IMR-90 (cell line): ENCODE measurements at regions of chr2 and their contacts with region 1.

Region 1: DNA sequence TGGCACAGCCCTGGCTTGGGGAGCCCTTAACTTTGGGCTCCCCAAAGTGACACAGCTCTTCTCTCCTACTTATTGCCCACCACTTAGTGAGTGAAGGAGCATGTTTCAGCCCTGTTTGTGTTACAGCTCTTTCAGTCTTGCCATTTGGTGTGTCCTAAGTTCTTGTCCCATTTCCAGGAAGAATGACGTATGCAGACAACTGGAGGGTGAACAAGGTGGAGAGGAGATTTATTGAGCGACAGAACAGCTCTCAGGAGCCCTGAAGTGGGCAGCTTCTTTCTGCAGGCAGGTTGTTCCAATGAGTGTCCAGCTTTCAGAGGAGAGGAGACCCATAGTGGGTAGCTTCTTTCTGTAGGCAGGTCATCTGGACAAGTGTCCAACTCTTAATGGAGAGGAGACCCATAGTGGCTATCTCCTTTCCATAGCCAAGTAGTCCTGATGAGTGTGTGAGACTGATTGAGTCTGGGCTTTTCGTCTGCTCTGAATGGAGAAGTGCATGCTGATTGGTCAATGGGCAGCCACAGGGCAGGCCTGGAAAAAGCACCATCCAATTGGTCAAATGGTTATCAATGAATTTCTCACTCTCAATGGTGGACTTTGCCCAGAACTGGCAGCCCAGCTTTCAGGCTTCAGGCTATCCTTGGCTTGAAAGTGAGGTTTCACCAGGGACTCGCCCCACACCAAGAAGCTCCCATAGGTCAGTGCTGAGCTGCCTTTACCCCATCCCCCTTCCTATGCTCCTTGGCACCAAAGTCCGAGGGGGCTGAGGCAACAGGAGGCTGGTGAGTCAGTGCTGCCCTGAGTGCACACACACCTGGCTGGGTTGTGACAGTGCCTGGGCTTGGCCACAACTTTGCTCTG is 688.2 kb downstream of the NYAP2 start:
- DNase-seq: no peak
- ATAC-seq: no peak
- H3K4me3 ChIP-seq: no peak overlapping the region
- H3K27ac ChIP-seq: no peak overlapping the region
- H3K4me1 ChIP-seq: no peaks in the 10 kb centered on the region
- H3K27me3 ChIP-seq: no peaks in the 10 kb centered on the region
- CTCF ChIP-seq: no peak
- POLR2A ChIP-seq: no peak
- RAD21 ChIP-seq: no peak

Region 2: GRCh38 chr2:225937713-225938112 is 150.0 kb before region 1 on chr2:
- CTCF ChIA-PET with region 1: no interaction called
- POLR2A ChIA-PET with region 1: no interaction called
- dilution Hi-C with region 1: no loop called
- in situ Hi-C with region 1: no loop called
- intact Hi-C with region 1: no loop called
- DNase-seq: peak; percentile 36
- ATAC-seq: no peak
- H3K4me3 ChIP-seq: no peak overlapping the region
- H3K27ac ChIP-seq: no peak overlapping the region
- H3K4me1 ChIP-seq: 0 out of 2 replicates have a peak, but pooled peaks cover 2% of the 10 kb centered on the region
- H3K27me3 ChIP-seq: no peaks in the 10 kb centered on the region
- CTCF ChIP-seq: no peak
- POLR2A ChIP-seq: no peak
- RAD21 ChIP-seq: no peak

Region 3: DNA sequence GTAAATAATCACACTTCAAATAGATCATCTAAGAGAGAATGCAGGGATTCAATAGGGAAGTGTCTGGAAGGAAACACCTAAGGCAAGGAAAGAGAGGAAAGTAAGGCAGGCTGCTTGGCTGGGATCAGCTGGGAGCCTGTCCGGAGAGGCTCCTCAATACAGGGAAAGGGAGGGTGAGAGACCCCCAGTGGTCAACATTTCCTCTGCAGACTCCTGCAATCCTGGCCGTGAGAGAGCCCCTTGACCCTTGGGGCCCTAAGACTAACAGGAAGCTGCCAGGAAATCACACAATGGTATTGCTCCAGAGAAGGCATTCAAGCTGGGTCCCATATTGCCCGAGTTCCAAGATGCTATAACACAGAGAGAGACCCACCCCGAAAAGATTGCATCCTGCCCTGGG is 138.8 kb before region 1 on chr2:
- CTCF ChIA-PET with region 1: no interaction called
- POLR2A ChIA-PET with region 1: no interaction called
- dilution Hi-C with region 1: no loop called
- in situ Hi-C with region 1: no loop called
- intact Hi-C with region 1: no loop called
- DNase-seq: no peak
- ATAC-seq: no peak
- H3K4me3 ChIP-seq: no peak overlapping the region
- H3K27ac ChIP-seq: no peak overlapping the region
- H3K4me1 ChIP-seq: no peaks in the 10 kb centered on the region
- H3K27me3 ChIP-seq: no peaks in the 10 kb centered on the region
- CTCF ChIP-seq: no peak
- POLR2A ChIP-seq: no peak
- RAD21 ChIP-seq: no peak

Region 4: GRCh38 chr2:226030788-226031646 is 56.7 kb before region 1 on chr2:
- CTCF ChIA-PET with region 1: no interaction called
- POLR2A ChIA-PET with region 1: no interaction called
- dilution Hi-C with region 1: no loop called
- in situ Hi-C with region 1: no loop called
- intact Hi-C with region 1: no loop called
- DNase-seq: peak; percentile 69
- ATAC-seq: peak; percentile 92
- H3K4me3 ChIP-seq: peak overlapping the region; percentile 52
- H3K27ac ChIP-seq: peak overlapping the region; percentile 89
- H3K4me1 ChIP-seq: peaks cover 6% of the 10 kb centered on the region
- H3K27me3 ChIP-seq: no peaks in the 10 kb centered on the region
- CTCF ChIP-seq: no peak
- POLR2A ChIP-seq: no peak
- RAD21 ChIP-seq: peak; percentile 33

Region 5: GRCh38 chr2:226098861-226099745 is 11.4 kb after region 1 on chr2:
- CTCF ChIA-PET with region 1: no interaction called
- POLR2A ChIA-PET with region 1: no interaction called
- dilution Hi-C with region 1: no loop called
- in situ Hi-C with region 1: no loop called
- intact Hi-C with region 1: loop called (anchors 2 kb)
- DNase-seq: no peak
- ATAC-seq: no peak
- H3K4me3 ChIP-seq: no peak overlapping the region
- H3K27ac ChIP-seq: no peak overlapping the region
- H3K4me1 ChIP-seq: no peaks in the 10 kb centered on the region
- H3K27me3 ChIP-seq: no peaks in the 10 kb centered on the region
- CTCF ChIP-seq: no peak
- POLR2A ChIP-seq: no peak
- RAD21 ChIP-seq: no peak